Activated CD4-positive, alpha-beta memory T cell treated with anti-CD3 and anti-CD28 coated beads for 36 hours (primary cell): ENCODE measurements at regions of chr17 and their contacts with region 1.

Region 1: GRCh38 chr17:63445979-63446691 is at the start of gene CYB561:
- DNase-seq: peak; percentile 81
- H3K4me3 Mint-ChIP-seq: peak within 1 kb of the TSS; percentile 70
- H3K27ac Mint-ChIP-seq: peak within 1 kb of the TSS; percentile 89
- H3K4me1 Mint-ChIP-seq: peaks cover 38% of the 10 kb centered on the region
- H3K27me3 Mint-ChIP-seq: peaks cover 1% of the 10 kb centered on the region
- total RNA-seq, gene CYB561: 9.4 to 9.7 TPM

Region 2: DNA sequence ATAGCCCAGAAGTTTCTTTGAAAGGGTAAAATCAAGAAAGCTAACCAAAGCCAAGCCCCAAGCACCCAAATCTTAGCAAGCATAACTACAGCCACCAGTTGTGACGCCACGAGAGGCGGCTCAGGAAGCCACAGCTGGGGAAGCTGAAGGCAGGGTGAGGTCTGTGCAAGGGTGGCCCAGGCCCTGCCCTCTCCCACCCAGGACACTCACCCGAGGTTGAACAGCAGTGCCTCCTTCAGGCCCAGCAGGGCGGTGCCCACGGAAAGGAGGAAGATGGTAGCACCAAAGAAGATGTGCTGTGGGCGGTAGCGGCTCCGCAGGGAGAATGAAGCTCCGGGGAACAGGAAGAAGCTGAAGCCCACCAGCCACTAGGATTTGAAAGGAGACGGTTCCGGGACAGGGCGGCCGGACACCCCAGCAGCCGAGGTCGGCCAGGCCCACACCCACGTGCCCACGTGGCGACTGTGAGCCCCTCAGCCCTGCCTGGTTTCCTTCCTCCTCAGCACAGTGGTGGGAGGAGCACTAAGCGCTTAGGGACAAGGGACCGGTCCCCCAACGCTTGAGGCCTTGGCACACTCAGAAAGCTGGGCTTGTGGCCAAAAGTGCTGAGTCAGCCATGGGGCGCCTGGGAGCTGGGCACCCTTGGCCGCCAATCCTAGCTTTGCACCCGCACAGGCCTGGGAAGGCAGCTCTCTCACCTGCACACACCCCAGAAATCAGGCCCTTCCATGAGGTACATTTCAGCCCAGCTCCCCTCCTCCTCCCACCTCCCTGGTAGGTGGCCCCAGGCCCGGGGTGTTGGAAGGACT is 11.1 kb before region 1 on chr17:
- CTCF ChIA-PET with region 1: interaction called, 16 read pairs
- POLR2A ChIA-PET with region 1: interaction called, 14 read pairs
- intact Hi-C with region 1: no loop called
- DNase-seq: peak; percentile 56
- H3K4me3 Mint-ChIP-seq: no peak overlapping the region
- H3K27ac Mint-ChIP-seq: peak overlapping the region; percentile 46
- H3K4me1 Mint-ChIP-seq: peaks cover 40% of the 10 kb centered on the region
- H3K27me3 Mint-ChIP-seq: no peaks in the 10 kb centered on the region

Region 3: DNA sequence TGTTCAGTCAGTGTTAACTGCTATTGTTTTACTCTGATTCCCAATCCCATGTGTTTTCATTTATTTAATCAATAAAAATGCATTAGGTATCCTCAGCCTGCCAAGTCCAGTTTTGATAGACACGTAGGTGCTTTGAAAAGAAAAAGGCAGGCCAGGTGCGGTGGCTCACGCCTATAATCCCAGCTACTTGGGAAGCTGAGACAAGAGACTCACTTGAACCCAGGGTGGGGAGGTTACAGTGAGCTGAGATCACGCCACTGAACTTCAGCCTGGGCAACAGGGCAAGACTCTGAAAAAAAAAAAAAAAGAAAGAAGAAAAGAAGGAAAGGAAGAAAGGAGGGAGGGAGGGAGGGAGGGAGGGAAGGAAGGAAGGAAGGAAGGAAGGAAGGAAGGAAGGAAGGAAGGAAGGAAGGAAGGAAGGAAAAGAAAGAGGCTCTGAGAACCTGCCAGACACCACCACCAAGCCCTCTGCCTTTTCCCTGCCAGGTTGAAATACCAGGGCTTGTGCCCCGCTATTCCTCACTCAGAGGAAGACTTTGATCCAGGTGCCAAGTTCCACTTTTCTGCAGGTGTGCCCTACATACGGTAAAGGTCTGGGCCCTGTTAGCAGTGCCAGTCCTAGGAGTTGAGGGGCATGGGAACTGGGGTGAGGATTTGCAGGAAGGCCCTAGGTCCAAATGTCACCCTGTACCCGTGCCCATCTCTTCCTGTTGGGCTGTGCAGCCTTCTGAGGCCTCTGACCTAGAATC is 66.9 kb after region 1 on chr17:
- CTCF ChIA-PET with region 1: no interaction called
- POLR2A ChIA-PET with region 1: no interaction called
- intact Hi-C with region 1: no loop called
- DNase-seq: no peak
- H3K4me3 Mint-ChIP-seq: no peak overlapping the region
- H3K27ac Mint-ChIP-seq: no peak overlapping the region
- H3K4me1 Mint-ChIP-seq: peaks cover 18% of the 10 kb centered on the region
- H3K27me3 Mint-ChIP-seq: peaks cover 5% of the 10 kb centered on the region